Activated T-helper 2 cell treated with anti-CD3 and anti-CD28 coated beads, Interferon-gamma antibody, Interleukin-2, Interleukin-4, amounts not matched to agents 10 μg/mL and 5 μg/mL and 100 μg/mL, durations not matched to agents 14 hours and 24 hours and 36 hours (primary cell): ENCODE measurements at regions of chr12 and their contacts with region 1.

Region 1: DNA sequence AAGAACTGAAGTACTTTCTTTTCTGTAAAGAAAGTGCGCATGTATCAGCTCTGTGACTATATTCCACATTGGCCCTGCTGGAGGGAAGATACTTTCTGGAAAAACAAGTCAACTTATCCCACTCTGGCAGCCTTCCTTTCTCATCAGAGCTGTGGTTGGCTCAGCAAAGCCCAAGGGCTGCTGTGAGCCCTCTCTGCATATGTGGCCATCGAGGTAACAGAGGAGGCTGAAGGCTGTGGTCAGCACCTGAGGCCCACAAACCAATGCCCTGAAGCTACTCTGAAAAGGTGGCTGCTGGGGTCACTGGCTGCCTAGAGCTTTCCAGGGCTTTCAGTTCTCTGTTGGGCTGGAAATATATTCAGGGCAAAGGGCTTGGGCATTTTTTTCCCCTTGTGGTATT is 70.8 kb upstream of the IGF1 start:
- DNase-seq: no peak
- H3K4me3 Mint-ChIP-seq: no peak overlapping the region
- H3K27ac Mint-ChIP-seq: no peak overlapping the region
- H3K4me1 Mint-ChIP-seq: no peaks in the 10 kb centered on the region
- H3K27me3 Mint-ChIP-seq: peaks cover 3% of the 10 kb centered on the region

Region 2: GRCh38 chr12:101439236-101439635 is 1112.0 kb before region 1 on chr12:
- intact Hi-C with region 1: no loop called
- DNase-seq: no peak
- H3K4me3 Mint-ChIP-seq: no peak overlapping the region
- H3K27ac Mint-ChIP-seq: no peak overlapping the region
- H3K4me1 Mint-ChIP-seq: no peaks in the 10 kb centered on the region
- H3K27me3 Mint-ChIP-seq: peaks cover 5% of the 10 kb centered on the region

Region 3: GRCh38 chr12:102095675-102096263 is 455.4 kb before region 1 on chr12:
- intact Hi-C with region 1: loop called (anchors 10 kb)
- DNase-seq: no peak
- H3K4me3 Mint-ChIP-seq: no peak overlapping the region
- H3K27ac Mint-ChIP-seq: no peak overlapping the region
- H3K4me1 Mint-ChIP-seq: peaks cover 18% of the 10 kb centered on the region
- H3K27me3 Mint-ChIP-seq: no peaks in the 10 kb centered on the region

Region 4: DNA sequence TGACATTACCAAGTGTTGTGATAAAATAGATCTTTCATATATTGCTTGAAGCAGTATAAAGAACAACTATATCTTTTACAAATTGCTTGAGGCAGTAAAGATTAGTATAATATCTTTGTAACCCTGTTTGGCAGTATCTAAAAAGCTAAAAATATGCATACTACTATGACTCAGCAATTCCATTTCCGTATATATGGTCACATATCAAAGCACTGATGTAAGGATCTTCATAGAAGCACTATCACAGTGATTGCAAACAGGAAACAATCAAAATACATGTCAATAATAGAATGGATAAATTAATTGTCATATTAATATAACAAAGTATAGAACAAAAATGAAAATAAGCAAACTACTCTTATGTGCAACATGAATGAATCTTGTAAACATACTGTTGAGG is 87.6 kb after region 1 on chr12:
- intact Hi-C with region 1: no loop called
- DNase-seq: no peak
- H3K4me3 Mint-ChIP-seq: no peak overlapping the region
- H3K27ac Mint-ChIP-seq: no peak overlapping the region
- H3K4me1 Mint-ChIP-seq: no peaks in the 10 kb centered on the region
- H3K27me3 Mint-ChIP-seq: no peaks in the 10 kb centered on the region